ENCODE measurements at regions of chr18 and their contacts with region 1.

Region 1: DNA sequence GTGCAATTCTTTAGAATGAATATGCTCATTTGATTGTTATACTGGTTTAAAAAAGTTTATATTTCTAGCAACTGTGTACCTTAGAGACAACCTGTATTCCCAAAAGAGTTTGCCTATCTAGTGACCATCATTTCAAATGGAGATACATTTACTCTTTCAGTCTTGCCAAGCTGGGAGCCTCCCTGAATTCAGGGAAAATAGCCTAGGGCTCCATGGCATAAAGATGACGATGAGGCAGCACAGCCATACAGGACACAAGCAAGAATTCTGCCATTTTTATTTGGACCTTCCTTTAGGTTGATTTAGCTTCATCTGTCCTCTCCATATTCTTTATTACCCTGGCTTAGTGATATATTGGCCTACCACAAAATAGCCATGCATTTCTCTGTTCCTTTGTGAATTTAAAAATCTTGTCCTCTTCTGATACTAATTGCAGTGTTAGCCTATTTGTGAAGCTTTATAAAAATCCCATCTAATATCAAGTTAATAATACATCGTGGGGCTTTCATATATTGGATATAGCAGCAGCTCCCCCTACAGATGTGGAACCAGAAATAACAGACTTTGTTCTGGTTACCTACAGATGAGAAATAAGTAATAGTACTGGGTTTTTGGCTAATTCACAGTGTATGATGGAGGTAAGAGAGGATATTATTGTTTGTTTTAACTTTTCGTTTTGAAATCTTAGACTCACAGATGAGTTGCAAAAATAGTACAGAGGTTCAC is 1661.9 kb upstream of the PIK3C3 start:
- DNase-seq: peak; percentile 8
- H3K4me3 Mint-ChIP-seq: no peak overlapping the region
- H3K27ac Mint-ChIP-seq: no peak overlapping the region
- H3K4me1 Mint-ChIP-seq: peaks cover 8% of the 10 kb centered on the region
- H3K27me3 Mint-ChIP-seq: no peaks in the 10 kb centered on the region
- CTCF ChIP-seq: no peak

Region 2: DNA sequence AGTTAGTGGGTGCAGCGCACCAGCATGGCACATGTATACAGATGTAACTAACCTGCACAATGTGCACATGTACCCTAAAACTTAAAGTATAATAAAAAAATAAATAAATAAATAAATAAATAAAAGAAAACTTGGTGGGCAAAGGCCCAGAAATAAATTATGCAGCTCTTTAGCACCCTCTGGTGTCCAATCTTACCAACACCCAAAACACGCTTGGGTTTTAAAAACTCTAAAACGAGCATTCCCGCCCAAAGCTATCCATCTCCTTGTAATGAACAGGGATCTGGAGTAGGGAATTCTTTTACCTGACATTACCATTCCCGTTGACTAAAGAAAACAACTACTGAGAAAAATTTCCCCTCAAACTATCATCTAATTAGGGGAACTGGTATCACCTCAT is 721.6 kb before region 1 on chr18:
- CTCF ChIA-PET with region 1: no interaction called
- intact Hi-C with region 1: loop called (anchors 10 kb)
- DNase-seq: peak; percentile 27
- H3K4me3 Mint-ChIP-seq: no peak overlapping the region
- H3K27ac Mint-ChIP-seq: no peak overlapping the region
- H3K4me1 Mint-ChIP-seq: no peaks in the 10 kb centered on the region
- H3K27me3 Mint-ChIP-seq: no peaks in the 10 kb centered on the region
- CTCF ChIP-seq: peak; percentile 44

Region 3: GRCh38 chr18:39841482-39842365 is 451.4 kb before region 1 on chr18:
- CTCF ChIA-PET with region 1: interaction called, 3 read pairs
- intact Hi-C with region 1: loop called (anchors 10 kb)
- DNase-seq: peak; percentile 74
- H3K4me3 Mint-ChIP-seq: peak overlapping the region; percentile 87
- H3K27ac Mint-ChIP-seq: no peak overlapping the region
- H3K4me1 Mint-ChIP-seq: peaks cover 12% of the 10 kb centered on the region
- H3K27me3 Mint-ChIP-seq: no peaks in the 10 kb centered on the region
- CTCF ChIP-seq: peak; percentile 54

Region 4: DNA sequence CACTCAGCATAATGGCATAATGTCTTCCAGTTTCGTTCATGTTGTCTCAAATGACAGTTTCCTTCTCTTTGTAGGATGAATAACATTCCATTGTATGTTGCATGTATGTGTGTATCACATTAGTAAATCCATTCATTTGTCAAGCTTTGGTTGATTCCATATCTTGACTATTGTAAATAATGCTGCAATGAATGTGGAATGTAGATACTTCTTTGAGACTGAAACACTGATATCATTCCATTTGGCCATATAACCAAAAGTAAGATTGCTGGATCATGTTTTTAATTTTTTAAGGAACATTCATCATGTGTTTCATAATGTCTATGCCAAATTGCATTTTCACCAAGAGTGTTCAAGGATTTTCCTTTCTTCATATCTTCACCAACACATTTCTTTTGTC is 49.5 kb before region 1 on chr18:
- CTCF ChIA-PET with region 1: no interaction called
- intact Hi-C with region 1: no loop called
- DNase-seq: no peak
- H3K4me3 Mint-ChIP-seq: no peak overlapping the region
- H3K27ac Mint-ChIP-seq: no peak overlapping the region
- H3K4me1 Mint-ChIP-seq: no peaks in the 10 kb centered on the region
- H3K27me3 Mint-ChIP-seq: no peaks in the 10 kb centered on the region
- CTCF ChIP-seq: no peak

Region 5: DNA sequence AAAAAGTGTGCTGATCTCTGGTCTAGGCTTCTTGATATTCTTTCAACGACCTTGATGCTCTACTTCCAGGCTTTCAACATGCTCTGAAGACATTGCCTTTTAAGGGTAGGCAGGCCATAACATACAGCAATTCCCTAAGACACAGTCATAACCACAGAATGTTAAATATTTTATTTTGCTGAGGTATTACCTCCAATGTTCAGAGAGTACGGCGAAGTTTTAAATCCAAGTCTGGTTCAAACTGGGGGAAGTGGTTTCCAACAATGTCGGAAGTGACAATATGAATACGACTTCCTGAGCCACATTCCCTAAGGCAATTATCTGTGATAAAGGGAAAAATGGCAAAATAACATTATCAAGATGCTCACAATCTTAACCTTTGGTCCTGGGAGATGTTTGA is 583.9 kb after region 1 on chr18:
- CTCF ChIA-PET with region 1: no interaction called
- intact Hi-C with region 1: no loop called
- DNase-seq: no peak
- H3K4me3 Mint-ChIP-seq: no peak overlapping the region
- H3K27ac Mint-ChIP-seq: no peak overlapping the region
- H3K4me1 Mint-ChIP-seq: no peaks in the 10 kb centered on the region
- H3K27me3 Mint-ChIP-seq: no peaks in the 10 kb centered on the region
- CTCF ChIP-seq: no peak

Measured in Calu3 (cell line).